Activated naive CD4-positive, alpha-beta T cell treated with anti-CD3 and anti-CD28 coated beads for 36 hours (primary cell): ENCODE measurements at regions of chr4 and their contacts with region 1.

Region 1: GRCh38 chr4:76179398-76180318 is 31.5 kb upstream of the NUP54 start:
- DNase-seq: peak; percentile 92
- H3K4me3 Mint-ChIP-seq: no peak overlapping the region
- H3K27ac Mint-ChIP-seq: no peak overlapping the region
- H3K4me1 Mint-ChIP-seq: no peaks in the 10 kb centered on the region
- H3K27me3 Mint-ChIP-seq: no peaks in the 10 kb centered on the region

Region 2: GRCh38 chr4:76160355-76160754 is 19.3 kb before region 1 on chr4:
- CTCF ChIA-PET with region 1: interaction called, 12 read pairs
- intact Hi-C with region 1: no loop called
- DNase-seq: no peak
- H3K4me3 Mint-ChIP-seq: no peak overlapping the region
- H3K27ac Mint-ChIP-seq: no peak overlapping the region
- H3K4me1 Mint-ChIP-seq: no peaks in the 10 kb centered on the region
- H3K27me3 Mint-ChIP-seq: no peaks in the 10 kb centered on the region

Region 3: GRCh38 chr4:76213415-76214176 is 33.9 kb after region 1 on chr4 and contains the start of gene SCARB2:
- CTCF ChIA-PET with region 1: interaction called, 7 read pairs
- intact Hi-C with region 1: loop called (anchors 1 kb)
- DNase-seq: peak; percentile 76
- H3K4me3 Mint-ChIP-seq: peak within 1 kb of the TSS; percentile 76
- H3K27ac Mint-ChIP-seq: peak within 1 kb of the TSS; percentile 74
- H3K4me1 Mint-ChIP-seq: peaks cover 31% of the 10 kb centered on the region
- H3K27me3 Mint-ChIP-seq: no peaks in the 10 kb centered on the region
- total RNA-seq, gene SCARB2: 5.4 to 7.8 TPM

Region 4: DNA sequence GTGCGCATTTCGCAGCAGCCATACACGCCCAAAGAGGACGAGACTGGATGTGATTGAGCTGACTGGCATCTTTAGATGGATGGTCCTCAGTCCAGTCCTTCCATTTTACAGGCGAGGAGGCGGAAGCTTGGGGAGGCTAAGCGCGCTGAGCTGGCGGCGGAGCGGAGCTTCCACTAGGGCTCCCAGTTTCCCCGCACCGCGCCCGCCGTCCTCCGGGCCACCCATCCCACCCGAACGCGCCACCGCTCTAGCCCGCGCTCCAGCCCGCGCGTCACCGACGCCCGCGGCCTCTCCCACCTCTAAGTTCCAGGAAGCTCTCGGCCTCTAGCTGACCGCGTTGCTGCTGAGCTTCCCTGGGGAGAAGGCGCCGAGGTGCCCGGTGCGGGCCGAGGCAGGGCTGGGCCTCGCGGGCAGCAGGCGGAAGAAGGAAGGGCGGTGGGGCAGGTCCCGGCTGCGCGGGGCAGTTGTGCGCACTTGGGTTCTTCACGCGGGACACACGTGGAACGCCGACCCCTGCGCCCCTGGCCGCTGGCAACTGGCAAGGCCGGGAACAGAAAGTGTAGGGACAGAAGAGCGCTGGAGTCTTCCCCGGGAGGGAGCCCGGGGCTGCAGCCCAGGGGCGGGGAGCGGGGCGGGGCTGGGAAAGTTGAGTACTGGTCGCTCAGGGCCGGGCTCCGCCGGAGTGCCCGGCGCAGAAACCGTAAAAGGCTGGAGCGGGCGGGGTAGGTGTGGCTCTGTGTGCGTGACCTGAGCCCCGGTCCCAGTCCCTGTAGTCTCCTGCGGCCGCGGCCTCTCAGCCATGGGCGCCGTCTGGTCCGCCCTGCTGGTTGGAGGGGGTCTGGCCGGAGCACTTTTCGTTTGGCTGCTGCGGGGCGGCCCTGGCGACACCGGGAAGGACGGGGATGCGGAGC is 126.6 kb after region 1 on chr4 and contains the start of gene STBD1:
- CTCF ChIA-PET with region 1: interaction called, 15 read pairs
- intact Hi-C with region 1: loop called (anchors 2 kb)
- DNase-seq: peak; percentile 19
- H3K4me3 Mint-ChIP-seq: peak within 1 kb of the TSS; percentile 72
- H3K27ac Mint-ChIP-seq: no peak within 1 kb of the TSS
- H3K4me1 Mint-ChIP-seq: peaks cover 17% of the 10 kb centered on the region
- H3K27me3 Mint-ChIP-seq: peaks cover 4% of the 10 kb centered on the region
- total RNA-seq, gene STBD1: not detected

Region 5: GRCh38 chr4:76430519-76431388 is 251.1 kb after region 1 on chr4:
- CTCF ChIA-PET with region 1: no interaction called
- intact Hi-C with region 1: loop called (anchors 2 kb)
- DNase-seq: no peak
- H3K4me3 Mint-ChIP-seq: no peak overlapping the region
- H3K27ac Mint-ChIP-seq: no peak overlapping the region
- H3K4me1 Mint-ChIP-seq: peaks cover 4% of the 10 kb centered on the region
- H3K27me3 Mint-ChIP-seq: peaks cover 12% of the 10 kb centered on the region

Region 6: GRCh38 chr4:76459291-76459723 is 279.6 kb after region 1 on chr4:
- CTCF ChIA-PET with region 1: no interaction called
- intact Hi-C with region 1: no loop called
- DNase-seq: no peak
- H3K4me3 Mint-ChIP-seq: no peak overlapping the region
- H3K27ac Mint-ChIP-seq: no peak overlapping the region
- H3K4me1 Mint-ChIP-seq: no peaks in the 10 kb centered on the region
- H3K27me3 Mint-ChIP-seq: no peaks in the 10 kb centered on the region

Region 7: DNA sequence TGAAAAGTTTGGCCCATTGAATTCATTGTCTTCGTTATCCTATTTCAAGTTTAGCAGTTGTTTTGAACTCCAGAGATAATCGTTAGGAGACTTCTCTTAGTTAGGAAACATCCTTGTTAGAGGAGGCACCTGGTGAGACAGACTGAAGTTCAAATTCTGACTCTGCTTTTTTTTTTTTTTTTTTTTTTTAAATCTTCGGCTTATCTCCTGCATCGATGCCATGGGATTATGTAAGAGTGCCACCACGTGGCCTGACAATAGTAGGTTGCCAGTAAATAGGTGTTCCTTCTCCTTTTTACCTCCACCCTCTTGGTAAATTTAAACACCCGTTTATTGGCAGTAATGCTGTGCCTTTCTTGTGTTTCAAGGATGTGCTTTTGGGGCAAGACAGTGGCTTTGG is 569.0 kb after region 1 on chr4:
- CTCF ChIA-PET with region 1: no interaction called
- intact Hi-C with region 1: loop called (anchors 5 kb)
- DNase-seq: peak; percentile 68
- H3K4me3 Mint-ChIP-seq: no peak overlapping the region
- H3K27ac Mint-ChIP-seq: no peak overlapping the region
- H3K4me1 Mint-ChIP-seq: peaks cover 2% of the 10 kb centered on the region
- H3K27me3 Mint-ChIP-seq: peaks cover 18% of the 10 kb centered on the region

Region 8: DNA sequence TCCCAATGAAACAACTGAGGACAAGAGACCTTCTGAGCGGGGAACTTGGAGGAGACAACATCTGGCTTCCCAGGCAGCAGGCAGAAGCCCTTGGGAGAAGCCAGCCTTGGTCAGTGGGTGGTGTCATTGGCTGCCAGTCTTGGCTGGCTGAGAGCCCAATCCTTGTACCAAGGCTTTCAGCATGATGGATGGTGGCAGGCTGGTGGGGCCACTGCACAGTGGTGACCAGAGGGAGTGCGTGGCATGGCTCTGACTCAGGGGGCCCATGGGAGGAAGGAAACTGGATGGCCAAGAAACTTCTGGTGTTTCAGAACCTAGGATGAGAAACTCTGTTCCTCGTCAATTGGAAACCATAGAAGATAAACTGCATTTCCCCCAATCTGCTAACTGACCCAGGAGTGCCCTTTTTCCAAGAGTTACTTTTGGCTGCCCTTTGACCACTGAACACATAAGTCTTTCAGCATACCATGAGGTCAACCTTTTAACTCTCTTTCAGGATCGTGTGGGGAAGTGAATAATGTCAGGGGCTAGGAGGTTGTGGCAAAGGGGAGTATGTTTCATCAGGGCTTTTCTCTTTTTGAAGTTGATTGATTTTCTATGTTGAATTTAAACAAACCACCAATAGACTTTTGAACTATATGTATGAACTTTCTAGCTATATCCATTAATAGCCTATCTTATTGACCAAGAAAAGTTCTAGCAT is 657.4 kb after region 1 on chr4:
- CTCF ChIA-PET with region 1: no interaction called
- intact Hi-C with region 1: no loop called
- DNase-seq: no peak
- H3K4me3 Mint-ChIP-seq: no peak overlapping the region
- H3K27ac Mint-ChIP-seq: no peak overlapping the region
- H3K4me1 Mint-ChIP-seq: no peaks in the 10 kb centered on the region
- H3K27me3 Mint-ChIP-seq: no peaks in the 10 kb centered on the region